GM10248 (cell line): ENCODE measurements at regions of chr18 and their contacts with region 1.

Region 1: DNA sequence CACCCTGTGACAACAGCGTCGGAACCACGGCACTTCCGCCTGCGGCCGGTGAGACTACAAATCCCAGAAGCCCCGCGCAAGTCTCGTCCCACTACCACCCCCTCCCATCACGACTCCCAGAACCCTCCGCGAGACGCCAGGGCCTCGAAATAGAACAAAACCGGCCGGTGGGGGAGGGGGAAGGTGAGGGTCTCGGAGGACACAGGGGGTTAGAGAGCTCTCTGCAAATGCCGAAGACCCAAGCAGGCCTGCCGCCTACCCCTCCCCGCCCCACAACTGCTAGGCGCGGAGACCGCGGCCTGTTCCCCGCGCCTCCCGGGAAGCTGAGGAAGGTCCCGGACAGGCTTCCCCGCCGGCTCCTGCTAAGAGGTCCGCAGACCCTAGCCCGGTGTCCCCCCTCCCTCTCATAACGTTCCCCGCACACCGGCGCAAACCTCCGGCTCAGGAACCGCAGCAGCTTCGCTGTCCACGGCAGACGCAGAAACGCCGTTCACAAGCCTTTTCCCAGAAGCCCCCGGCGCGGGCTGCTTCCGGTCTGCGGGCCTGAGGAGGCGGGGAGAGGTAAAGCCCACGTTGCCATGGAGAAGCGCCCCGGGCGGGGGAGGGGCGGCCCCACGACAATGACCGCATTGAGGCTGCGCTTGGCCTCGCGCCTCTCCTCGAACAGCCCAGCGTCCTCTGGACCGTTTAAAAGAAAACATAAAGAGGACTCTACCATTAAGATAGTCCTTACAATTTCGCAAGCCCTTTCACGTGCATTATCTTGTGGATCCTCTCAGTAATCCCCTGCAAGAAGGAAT is at the start of gene ZNF24:
- DNase-seq: peak; percentile 97
- CTCF ChIP-seq: no peak

Region 2: DNA sequence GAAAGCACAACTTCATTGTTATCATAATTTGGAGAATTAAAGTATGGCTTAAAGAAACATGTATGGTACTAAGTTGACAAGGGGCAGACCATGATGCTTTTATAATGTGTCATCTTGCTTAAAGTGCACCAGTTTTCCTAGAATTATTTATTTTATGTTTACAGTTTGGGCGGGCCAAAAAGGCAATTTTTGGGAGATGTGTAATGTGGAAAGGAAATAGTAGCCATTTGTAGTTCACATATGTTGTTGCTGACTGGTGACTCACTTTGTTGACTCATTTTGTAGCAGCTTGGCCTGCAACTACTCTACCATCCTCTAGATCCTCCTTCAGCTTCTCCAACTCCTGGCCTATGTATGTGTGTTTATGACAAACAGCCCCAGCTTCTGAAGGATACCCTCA is 61.8 kb before region 1 on chr18:
- CTCF ChIA-PET with region 1: no interaction called
- POLR2A ChIA-PET with region 1: no interaction called
- DNase-seq: no peak
- CTCF ChIP-seq: no peak

Region 3: DNA sequence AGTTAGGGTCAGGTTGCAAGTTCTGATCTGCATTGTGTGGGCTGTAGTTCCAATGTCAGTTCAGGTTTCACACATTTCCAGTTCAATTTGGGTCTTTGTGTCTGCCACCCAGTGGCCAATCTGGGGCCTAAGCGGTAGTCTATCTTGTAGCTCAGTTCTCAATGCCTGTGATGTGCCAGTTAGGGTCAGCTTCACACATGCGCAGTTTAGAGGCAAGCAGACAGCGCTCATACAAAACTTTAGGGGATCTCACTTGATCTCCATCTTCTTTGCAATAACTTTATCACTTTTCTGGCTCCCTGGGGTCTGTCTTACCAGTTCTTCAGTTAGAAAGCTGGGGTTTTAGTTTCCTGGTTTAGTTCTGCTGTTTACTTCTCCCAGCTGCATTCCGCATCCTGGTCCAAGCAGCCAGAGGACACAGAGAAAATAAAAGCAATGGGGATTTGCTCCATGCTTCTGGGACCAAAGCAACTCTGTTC is 11.0 kb after region 1 on chr18:
- CTCF ChIA-PET with region 1: interaction called, 25 read pairs
- POLR2A ChIA-PET with region 1: no interaction called
- DNase-seq: peak; percentile 57
- CTCF ChIP-seq: peak; percentile 69